Activated CD4-positive, alpha-beta T cell treated with anti-CD3 and anti-CD28 coated beads, Interleukin-2, amount 10 ng/mL, durations not matched to agents 7 days and 5 days (primary cell): ENCODE measurements at regions of chr1 and their contacts with region 1.

Region 1: GRCh38 chr1:150256554-150257341 is 826 bp upstream of the CA14 start:
- DNase-seq: no peak
- H3K4me3 Mint-ChIP-seq: no peak overlapping the region
- H3K27ac Mint-ChIP-seq: no peak overlapping the region
- H3K4me1 Mint-ChIP-seq: peaks cover 13% of the 10 kb centered on the region
- H3K27me3 Mint-ChIP-seq: peaks cover 50% of the 10 kb centered on the region

Region 2: GRCh38 chr1:150186789-150187559 is 69.8 kb before region 1 on chr1:
- CTCF ChIA-PET with region 1: no interaction called
- POLR2A ChIA-PET with region 1: no interaction called
- DNase-seq: peak; percentile 23
- H3K4me3 Mint-ChIP-seq: no peak overlapping the region
- H3K27ac Mint-ChIP-seq: peak overlapping the region; percentile 37
- H3K4me1 Mint-ChIP-seq: peaks cover 13% of the 10 kb centered on the region
- H3K27me3 Mint-ChIP-seq: no peaks in the 10 kb centered on the region

Region 3: GRCh38 chr1:150243003-150243402 is 13.7 kb before region 1 on chr1:
- CTCF ChIA-PET with region 1: interaction called, 18 read pairs
- POLR2A ChIA-PET with region 1: no interaction called
- DNase-seq: no peak
- H3K4me3 Mint-ChIP-seq: no peak overlapping the region
- H3K27ac Mint-ChIP-seq: no peak overlapping the region
- H3K4me1 Mint-ChIP-seq: no peaks in the 10 kb centered on the region
- H3K27me3 Mint-ChIP-seq: peaks cover 10% of the 10 kb centered on the region

Region 4: GRCh38 chr1:150273311-150273710 is 16.6 kb after region 1 on chr1:
- CTCF ChIA-PET with region 1: interaction called, 12 read pairs
- POLR2A ChIA-PET with region 1: no interaction called
- DNase-seq: no peak
- H3K4me3 Mint-ChIP-seq: no peak overlapping the region
- H3K27ac Mint-ChIP-seq: no peak overlapping the region
- H3K4me1 Mint-ChIP-seq: peaks cover 12% of the 10 kb centered on the region
- H3K27me3 Mint-ChIP-seq: no peaks in the 10 kb centered on the region